Left lung (tissue), 14 donors: ENCODE measurements at regions of chr19 and their contacts with region 1.

Region 1: DNA sequence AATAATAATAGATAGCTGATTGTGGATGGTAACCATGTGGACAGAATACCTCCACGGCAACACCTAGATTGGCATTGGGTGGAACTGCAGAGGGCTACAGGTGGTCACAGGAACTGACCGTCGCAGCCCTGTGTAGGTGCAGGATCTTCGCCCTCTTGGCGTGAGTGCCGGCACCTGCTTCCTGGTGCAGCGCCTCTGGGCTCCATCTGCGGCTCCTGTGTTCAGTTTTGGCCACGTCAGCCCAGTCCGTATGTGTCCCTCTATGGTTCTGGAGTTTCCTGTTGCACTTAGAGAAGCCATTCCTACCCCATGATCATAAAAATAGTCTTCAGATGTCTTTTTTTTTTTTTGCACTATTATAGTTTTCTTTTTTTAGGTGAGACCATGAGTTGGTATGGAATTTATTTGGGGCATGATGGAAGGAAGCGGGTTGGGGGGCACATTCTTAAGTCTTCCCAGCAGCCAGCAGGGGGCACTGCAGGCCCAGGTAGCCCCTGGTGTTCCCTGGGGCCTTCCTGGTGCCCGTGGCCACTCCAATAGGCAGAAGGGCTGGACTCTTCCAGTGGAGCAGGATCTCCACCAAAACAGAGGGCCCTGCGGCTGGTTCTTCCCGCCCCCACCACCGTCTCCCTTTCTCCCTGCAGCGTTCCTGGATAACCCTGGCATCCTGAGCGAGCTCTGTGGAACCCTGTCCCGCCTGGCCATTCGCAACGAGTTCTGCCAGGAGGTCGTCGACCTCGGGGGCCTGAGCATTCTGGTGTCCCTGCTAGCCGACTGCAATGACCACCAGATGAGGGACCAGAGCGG is 10.1 kb upstream of the SLC25A42 start:
- DNase-seq: peak in 2 of 4 donors; percentile 62 to 81
- ATAC-seq: peak; percentile 88
- H3K4me3 ChIP-seq: no peak overlapping the region
- H3K27ac ChIP-seq: no peak overlapping the region
- H3K4me1 ChIP-seq: no peaks in the 10 kb centered on the region
- H3K27me3 ChIP-seq: no peaks in the 10 kb centered on the region
- CTCF ChIP-seq: peak; percentile 55 to 59

Region 2: DNA sequence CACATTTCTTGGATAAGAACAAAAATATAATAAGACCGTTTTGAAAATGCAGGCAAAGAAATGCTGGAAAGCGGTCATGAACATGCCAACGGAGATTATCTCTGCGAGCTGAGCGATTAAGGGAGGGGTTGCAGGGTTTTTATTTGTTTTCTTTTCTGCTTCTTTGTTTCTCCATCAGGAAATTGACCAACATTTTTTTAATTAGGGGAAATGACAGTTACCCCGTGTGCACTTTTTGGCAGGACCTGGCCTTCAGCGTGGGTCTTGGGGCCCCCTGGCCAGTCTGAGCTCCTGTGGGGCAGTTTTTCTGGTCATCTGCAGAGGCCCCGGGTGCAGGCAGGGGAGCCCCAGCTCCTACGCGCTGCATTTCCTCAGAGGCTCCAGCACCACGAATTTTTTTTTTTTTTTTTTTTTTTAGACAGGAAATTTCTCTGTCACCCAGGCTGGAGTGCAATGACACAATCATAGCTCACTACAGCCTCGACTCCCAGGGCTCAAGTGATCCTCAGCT is 81.4 kb before region 1 on chr19:
- intact Hi-C with region 1: no loop called
- DNase-seq: peak in 2 of 4 donors; percentile 21 to 37
- ATAC-seq: peak; percentile 42
- H3K4me3 ChIP-seq: no peak overlapping the region
- H3K27ac ChIP-seq: peak overlapping the region; percentile 41 to 95
- H3K4me1 ChIP-seq: peaks cover 7 to 76% of the 10 kb centered on the region in 2 donors
- H3K27me3 ChIP-seq: no peaks in the 10 kb centered on the region
- CTCF ChIP-seq: no peak

Region 3: DNA sequence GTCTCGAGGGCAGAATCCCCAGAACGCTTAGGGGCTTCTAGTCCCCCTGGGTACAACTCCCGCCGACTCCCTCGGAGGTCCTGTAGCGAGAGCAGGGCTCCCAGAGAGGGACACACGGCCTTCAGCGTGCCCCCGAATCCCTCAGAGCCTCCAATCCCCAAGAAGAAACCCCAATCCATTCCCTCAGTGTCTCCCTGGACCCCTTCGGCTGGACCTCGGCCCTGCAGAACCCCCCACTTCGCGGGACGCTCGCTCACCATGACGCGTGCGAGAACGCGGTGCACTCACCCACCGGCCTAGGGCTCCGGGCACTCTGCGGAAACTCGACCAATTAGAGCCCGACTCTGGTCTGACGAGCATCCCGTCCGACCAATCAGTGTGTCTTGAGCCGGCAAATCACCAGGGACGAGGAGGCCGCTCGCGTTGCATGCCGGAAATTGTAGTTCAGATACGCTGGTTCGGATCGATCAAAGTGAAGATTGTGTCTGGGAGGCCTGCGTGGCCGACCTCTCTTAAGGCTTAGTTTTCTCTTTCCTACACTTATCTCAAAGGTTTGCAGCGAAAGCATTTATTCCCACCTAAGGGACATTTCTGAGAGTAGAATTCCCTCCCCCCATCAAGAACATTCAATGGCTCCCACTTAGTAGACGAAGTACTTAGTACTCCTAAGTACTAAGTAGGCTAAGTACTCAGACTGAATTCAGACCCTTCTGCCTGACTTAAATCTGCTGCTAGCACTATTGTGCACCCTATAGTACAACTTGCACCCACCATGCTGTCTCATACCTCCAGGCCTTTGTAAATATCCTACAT is 84.7 kb after region 1 on chr19 and contains the start of gene TMEM161A:
- intact Hi-C with region 1: loop called in 1 of 2 experiments (anchors 10 kb)
- DNase-seq: peak; percentile 95 to 98 (median 98)
- ATAC-seq: peak; percentile 99
- H3K4me3 ChIP-seq: peak within 1 kb of the TSS; percentile 67 to 68
- H3K27ac ChIP-seq: peak within 1 kb of the TSS; percentile 8 to 63
- H3K4me1 ChIP-seq: peaks cover 5 to 19% of the 10 kb centered on the region in 2 donors
- H3K27me3 ChIP-seq: no peaks in the 10 kb centered on the region
- CTCF ChIP-seq: no peak
- polyA plus RNA-seq, gene TMEM161A: 22.3 to 28.0 (median 25.0) TPM